Activated naive CD4-positive, alpha-beta T cell treated with anti-CD3 and anti-CD28 coated beads, Interleukin-2, amount 10 ng/mL, durations not matched to agents 7 days and 5 days (primary cell): ENCODE measurements at regions of chr7 and their contacts with region 1.

Region 1: DNA sequence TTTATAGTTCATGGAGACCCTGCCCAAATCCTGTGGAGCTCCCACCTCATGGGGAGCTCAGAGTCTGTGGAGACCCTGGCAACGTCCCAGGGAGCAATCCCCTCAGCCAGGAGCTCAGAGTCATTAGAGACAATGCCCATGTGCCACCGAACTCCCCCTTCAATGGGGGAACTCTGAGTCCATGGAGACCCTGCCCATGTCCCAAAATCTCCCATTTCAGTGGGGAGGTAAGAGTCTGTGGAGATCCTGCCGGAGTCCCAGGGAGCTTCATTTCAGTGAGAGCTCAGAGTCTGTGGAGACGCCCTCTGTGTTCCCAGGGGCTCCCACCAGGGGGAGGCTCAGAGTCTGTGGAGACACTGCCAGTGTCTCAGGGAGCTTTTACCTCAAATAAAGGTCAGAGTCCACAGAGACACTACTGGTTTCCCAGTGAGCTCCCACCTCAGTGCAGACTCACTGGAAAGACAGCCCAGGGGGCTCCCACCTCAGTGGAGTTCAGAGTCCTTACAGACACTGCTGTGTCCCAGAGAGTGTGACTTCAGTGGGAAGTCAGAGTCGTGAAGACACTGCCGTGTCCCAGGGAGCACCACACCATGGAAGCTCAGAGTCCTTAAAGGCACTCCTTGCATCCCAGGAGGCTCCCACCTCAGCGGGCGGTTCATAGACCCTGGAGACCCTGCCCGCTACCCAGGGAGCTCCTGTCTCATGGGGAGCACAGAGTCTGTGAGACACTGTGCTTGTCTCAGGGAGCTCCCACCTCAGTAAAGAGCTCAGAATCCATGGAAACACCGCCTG is 5.0 kb downstream of the MYO1G start:
- DNase-seq: peak; percentile 77
- H3K4me3 Mint-ChIP-seq: no peak overlapping the region
- H3K27ac Mint-ChIP-seq: peak overlapping the region; percentile 77
- H3K4me1 Mint-ChIP-seq: peaks cover 55% of the 10 kb centered on the region
- H3K27me3 Mint-ChIP-seq: no peaks in the 10 kb centered on the region

Region 2: GRCh38 chr7:44581879-44582603 is 391.8 kb before region 1 on chr7 and contains the start of gene TMED4:
- CTCF ChIA-PET with region 1: no interaction called
- DNase-seq: peak; percentile 100
- H3K4me3 Mint-ChIP-seq: peak within 1 kb of the TSS; percentile 90
- H3K27ac Mint-ChIP-seq: peak within 1 kb of the TSS; percentile 95
- H3K4me1 Mint-ChIP-seq: peaks cover 40% of the 10 kb centered on the region
- H3K27me3 Mint-ChIP-seq: peaks cover 17% of the 10 kb centered on the region

Region 3: DNA sequence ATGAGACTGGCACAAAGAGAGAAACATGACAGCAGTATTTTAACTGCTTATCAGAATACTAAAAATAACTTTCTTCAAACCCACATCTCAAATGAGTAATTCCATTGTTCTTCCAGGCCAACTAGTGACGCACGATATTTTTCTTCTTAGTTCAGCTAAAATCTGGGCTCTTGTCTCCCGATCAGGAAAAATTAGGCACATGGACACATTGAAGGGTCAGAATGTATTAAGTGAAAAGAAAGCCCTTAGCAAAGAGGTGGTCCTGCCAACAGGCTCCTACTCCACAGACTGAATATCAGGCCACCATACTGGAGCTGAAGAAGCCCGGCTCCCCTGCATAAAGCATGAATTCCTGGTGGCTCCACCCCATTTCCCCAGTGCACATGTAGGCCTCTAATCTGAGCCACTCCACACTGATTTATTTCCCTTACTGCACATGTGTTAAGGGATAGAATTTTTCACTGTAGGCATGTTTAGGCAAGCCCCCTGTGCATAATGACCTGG is 16.8 kb after region 1 on chr7:
- CTCF ChIA-PET with region 1: interaction called, 10 read pairs
- DNase-seq: no peak
- H3K4me3 Mint-ChIP-seq: no peak overlapping the region
- H3K27ac Mint-ChIP-seq: no peak overlapping the region
- H3K4me1 Mint-ChIP-seq: peaks cover 49% of the 10 kb centered on the region
- H3K27me3 Mint-ChIP-seq: peaks cover 3% of the 10 kb centered on the region

Region 4: DNA sequence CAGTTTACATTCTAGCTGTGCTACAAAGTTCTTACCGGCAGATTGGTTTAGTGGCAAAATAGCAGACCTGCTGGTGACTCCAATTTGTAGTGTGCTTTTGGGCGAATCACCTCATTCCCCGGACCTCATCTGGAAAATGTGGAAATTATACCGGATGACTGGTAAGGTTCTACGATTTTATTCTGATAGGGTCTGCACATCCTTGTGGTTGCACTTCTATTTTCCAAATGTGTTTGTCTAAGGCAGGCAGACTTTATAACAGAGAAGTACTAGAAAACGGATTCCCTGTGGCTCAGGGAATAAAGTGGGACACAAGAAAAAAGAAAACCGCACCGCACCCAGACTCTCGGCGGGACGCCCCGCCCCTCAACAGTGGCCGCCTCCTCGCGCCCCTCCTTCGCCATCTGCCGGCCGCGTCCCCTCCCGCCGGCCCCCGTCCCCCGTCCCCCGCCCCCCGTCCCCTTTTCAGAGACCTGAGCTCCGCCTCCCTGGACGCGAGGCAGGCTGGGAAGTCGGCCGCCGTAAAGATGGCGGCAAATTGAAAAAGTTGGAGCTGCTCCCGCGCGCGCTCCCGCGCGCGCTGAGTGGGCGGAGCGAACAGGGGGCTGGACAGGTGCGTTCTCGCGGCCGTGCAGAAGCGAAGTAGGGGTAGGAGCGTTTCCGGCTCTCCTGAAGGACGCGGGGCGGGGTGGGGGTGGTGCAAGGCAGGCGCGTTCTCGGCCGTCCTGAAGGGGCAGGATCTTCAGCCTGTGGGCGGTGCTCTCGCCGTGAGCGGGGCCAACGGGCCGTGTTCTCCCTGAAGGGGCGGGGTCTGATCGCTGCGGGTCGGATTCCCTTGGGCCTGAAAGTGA is 25.7 kb after region 1 on chr7:
- CTCF ChIA-PET with region 1: interaction called, 41 read pairs
- DNase-seq: peak; percentile 100
- H3K4me3 Mint-ChIP-seq: peak overlapping the region; percentile 92
- H3K27ac Mint-ChIP-seq: peak overlapping the region; percentile 94
- H3K4me1 Mint-ChIP-seq: peaks cover 61% of the 10 kb centered on the region
- H3K27me3 Mint-ChIP-seq: no peaks in the 10 kb centered on the region

Region 5: DNA sequence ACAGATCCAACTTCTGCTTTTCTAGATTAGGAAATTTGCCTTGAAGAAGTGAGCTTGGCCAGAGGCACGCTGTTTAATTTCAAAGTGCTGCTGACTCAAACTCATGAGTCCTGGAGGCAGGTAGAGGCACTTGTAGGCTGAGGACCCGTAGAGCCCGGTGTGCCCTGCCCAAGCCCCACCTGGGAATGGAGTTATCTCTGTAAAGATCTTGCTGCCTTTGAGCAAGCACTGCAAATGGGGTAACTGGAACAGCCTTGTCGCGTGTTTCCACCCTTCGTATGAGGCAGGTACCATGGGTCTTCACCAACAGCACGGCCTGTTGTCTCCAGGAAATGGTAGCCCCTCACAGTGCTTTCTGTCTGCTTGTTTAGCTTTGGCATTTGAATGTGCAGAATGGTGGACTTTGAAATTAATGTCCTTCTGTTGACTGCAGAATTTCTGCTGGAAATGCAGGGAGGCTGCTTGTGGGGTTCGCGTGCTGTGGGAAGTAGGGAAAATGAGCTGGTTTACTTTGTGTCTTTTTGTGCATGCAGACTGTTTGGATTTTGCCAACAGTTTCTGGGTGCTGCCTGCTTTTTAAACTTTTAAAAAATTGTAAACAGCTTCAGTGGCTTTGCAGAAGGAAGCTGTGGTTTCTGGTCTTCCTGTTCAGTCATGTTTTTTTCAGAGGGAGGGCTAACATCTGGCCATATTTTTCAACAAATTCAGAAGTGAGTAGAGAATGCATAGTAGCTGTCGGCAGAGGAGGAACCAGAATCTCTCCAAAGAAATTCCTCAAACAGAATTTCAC is 53.4 kb after region 1 on chr7:
- CTCF ChIA-PET with region 1: interaction called, 51 read pairs
- DNase-seq: peak; percentile 54
- H3K4me3 Mint-ChIP-seq: peak overlapping the region; percentile 82
- H3K27ac Mint-ChIP-seq: peak overlapping the region; percentile 95
- H3K4me1 Mint-ChIP-seq: peaks cover 63% of the 10 kb centered on the region
- H3K27me3 Mint-ChIP-seq: no peaks in the 10 kb centered on the region

Region 6: GRCh38 chr7:45033261-45033930 is 59.6 kb after region 1 on chr7:
- CTCF ChIA-PET with region 1: interaction called, 51 read pairs
- DNase-seq: peak; percentile 26
- H3K4me3 Mint-ChIP-seq: peak overlapping the region; percentile 43
- H3K27ac Mint-ChIP-seq: peak overlapping the region; percentile 83
- H3K4me1 Mint-ChIP-seq: peaks cover 81% of the 10 kb centered on the region
- H3K27me3 Mint-ChIP-seq: no peaks in the 10 kb centered on the region

Region 7: GRCh38 chr7:45111298-45112223 is 137.8 kb after region 1 on chr7 and contains the start of gene TBRG4:
- CTCF ChIA-PET with region 1: interaction called, 14 read pairs
- DNase-seq: peak; percentile 96
- H3K4me3 Mint-ChIP-seq: peak within 1 kb of the TSS; percentile 97
- H3K27ac Mint-ChIP-seq: peak within 1 kb of the TSS; percentile 99
- H3K4me1 Mint-ChIP-seq: peaks cover 59% of the 10 kb centered on the region
- H3K27me3 Mint-ChIP-seq: peaks cover 32% of the 10 kb centered on the region

Region 8: DNA sequence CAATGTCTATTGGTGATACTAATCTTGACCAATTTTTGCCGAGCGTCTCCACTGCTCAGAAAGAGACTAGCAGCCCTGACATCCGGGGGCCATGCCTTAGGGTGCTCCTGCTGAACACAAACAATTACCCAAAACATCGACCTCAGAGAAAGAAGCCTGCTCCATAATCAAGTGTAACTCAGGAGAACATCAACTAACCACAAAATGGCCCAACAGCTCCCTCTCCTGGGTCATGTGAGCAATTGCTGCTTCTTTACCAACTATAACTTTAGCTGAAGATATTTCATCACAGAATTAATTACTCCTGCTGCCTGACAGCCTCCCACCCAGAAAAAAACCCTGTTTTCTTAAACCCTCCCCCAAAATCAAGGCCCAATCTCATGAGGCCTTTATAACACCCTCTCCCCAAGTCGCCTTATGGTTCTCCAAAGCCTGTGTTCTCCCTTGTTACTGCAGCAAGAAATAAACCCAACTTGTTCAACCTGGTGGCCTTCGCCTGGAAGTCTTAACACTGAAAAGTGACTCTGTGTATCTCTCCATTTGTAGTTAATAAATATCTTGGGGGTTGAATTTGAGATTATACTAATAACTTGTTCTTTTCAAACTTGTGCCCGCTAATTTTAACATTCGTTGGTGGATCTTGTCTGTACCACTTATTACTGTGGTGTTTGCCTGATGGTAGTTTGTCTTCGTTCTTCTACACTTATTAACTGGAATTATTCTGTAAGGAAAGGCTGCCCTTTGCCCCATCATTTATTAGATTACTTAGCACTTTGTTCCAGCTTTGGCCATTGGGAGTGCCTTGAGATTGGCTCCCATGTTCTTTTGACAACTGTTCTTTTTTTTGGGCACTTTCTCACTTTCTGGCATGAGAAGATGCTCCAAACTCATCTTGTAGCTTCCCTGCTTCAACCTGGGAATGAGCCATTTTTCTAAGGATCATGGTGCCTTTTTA is 162.6 kb after region 1 on chr7:
- CTCF ChIA-PET with region 1: interaction called, 102 read pairs
- DNase-seq: peak; percentile 82
- H3K4me3 Mint-ChIP-seq: no peak overlapping the region
- H3K27ac Mint-ChIP-seq: no peak overlapping the region
- H3K4me1 Mint-ChIP-seq: peaks cover 32% of the 10 kb centered on the region
- H3K27me3 Mint-ChIP-seq: peaks cover 38% of the 10 kb centered on the region